Activated B cell treated with CpG ODN at 0.5 μM for 24 hours (primary cell): ENCODE measurements at regions of chr1 and their contacts with region 1.

Region 1: DNA sequence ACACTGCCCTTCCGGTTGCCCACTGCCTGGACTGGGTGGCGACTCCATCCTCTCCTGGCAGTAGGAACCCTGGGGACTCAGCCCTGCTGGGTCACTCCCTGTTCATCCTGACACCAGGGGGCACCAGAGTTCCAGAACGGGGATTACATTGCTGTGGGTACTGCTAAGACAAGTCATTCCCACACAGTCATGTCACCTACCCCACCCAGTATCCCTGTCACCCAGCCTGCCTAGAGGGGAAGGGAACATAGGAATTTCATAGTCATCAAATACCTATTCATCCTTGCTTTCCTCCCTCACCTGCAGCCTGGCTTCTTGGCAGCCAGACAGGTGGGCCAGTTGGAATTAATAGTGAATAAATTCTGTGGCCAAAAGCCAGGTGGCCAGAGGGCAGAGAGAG is 9.8 kb upstream of the SFN start:
- DNase-seq: peak; percentile 67
- ATAC-seq: peak; percentile 94
- H3K4me3 Mint-ChIP-seq: no peak overlapping the region
- H3K27ac Mint-ChIP-seq: no peak overlapping the region
- H3K4me1 Mint-ChIP-seq: no peaks in the 10 kb centered on the region
- H3K27me3 Mint-ChIP-seq: no peaks in the 10 kb centered on the region
- CTCF ChIP-seq: no peak

Region 2: DNA sequence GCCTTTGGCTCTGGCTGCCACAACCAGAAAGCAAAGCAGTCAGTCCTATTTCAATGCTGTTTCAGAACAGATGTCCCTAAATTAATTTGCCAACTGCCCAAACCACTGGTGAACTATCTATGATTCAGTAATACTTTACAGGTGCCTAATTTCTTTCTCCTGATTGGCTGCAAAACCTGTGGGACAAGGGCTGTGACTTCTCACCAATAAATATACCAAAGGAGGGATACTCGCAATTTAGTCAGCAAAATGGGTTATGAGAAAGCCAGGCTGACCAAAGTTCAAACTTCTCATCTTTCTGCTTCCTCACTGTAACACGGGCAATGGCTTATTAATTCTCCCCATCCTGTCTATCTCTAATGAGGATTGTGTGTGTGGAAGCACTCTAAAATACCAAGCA is 24.2 kb after region 1 on chr1:
- CTCF ChIA-PET with region 1: interaction called, 18 read pairs
- POLR2A ChIA-PET with region 1: no interaction called
- intact Hi-C with region 1: loop called (anchors 1 kb)
- DNase-seq: no peak
- ATAC-seq: no peak
- H3K4me3 Mint-ChIP-seq: no peak overlapping the region
- H3K27ac Mint-ChIP-seq: no peak overlapping the region
- H3K4me1 Mint-ChIP-seq: no peaks in the 10 kb centered on the region
- H3K27me3 Mint-ChIP-seq: no peaks in the 10 kb centered on the region
- CTCF ChIP-seq: no peak

Region 3: GRCh38 chr1:26882696-26883463 is 29.7 kb after region 1 on chr1:
- CTCF ChIA-PET with region 1: interaction called, 18 read pairs
- POLR2A ChIA-PET with region 1: interaction called, 9 read pairs
- intact Hi-C with region 1: loop called (anchors 1 kb)
- DNase-seq: no peak
- ATAC-seq: no peak
- H3K4me3 Mint-ChIP-seq: no peak overlapping the region
- H3K27ac Mint-ChIP-seq: no peak overlapping the region
- H3K4me1 Mint-ChIP-seq: peaks cover 6% of the 10 kb centered on the region
- H3K27me3 Mint-ChIP-seq: no peaks in the 10 kb centered on the region
- CTCF ChIP-seq: no peak